B cell (primary cell): ENCODE measurements at regions of chr4 and their contacts with region 1.

Region 1: GRCh38 chr4:56301181-56302076 is 85.9 kb downstream of the AASDH start:
- DNase-seq: peak; percentile 56
- ATAC-seq: peak; percentile 57
- H3K4me3 ChIP-seq: no peak overlapping the region
- H3K4me3 Mint-ChIP-seq: no peak overlapping the region
- H3K27ac ChIP-seq: no peak overlapping the region
- H3K27ac Mint-ChIP-seq: no peak overlapping the region
- H3K4me1 ChIP-seq: peaks cover 0 to 5% of the 10 kb centered on the region in 2 donors
- H3K4me1 Mint-ChIP-seq: peaks cover 7% of the 10 kb centered on the region
- H3K27me3 ChIP-seq: no peaks in the 10 kb centered on the region
- H3K27me3 Mint-ChIP-seq: no peaks in the 10 kb centered on the region
- CTCF ChIP-seq: peak; percentile 61

Region 2: DNA sequence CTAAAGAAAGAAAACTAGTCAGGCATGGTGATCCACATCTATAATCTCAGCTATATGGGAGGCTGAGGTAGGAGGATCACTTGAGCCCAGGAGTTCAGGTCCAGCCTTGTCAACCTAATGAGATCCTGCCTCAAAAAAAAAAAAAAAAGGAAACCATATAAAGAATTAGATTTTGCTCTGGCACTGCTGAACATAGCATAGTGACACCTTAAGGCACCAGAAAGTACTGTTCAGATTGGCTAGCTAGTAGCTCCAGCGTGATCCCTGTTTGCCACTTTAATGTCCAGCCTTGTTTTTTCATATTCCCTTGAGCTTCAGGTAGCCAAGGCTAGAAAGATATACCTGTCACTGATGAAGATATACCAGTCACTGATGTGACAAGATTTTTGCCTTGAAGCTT is 413.8 kb before region 1 on chr4:
- CTCF ChIA-PET with region 1: no interaction called
- POLR2A ChIA-PET with region 1: no interaction called
- intact Hi-C with region 1: loop called (anchors 5 kb)
- DNase-seq: no peak
- ATAC-seq: no peak
- H3K4me3 ChIP-seq: no peak overlapping the region
- H3K4me3 Mint-ChIP-seq: no peak overlapping the region
- H3K27ac ChIP-seq: no peak overlapping the region
- H3K27ac Mint-ChIP-seq: no peak overlapping the region
- H3K4me1 ChIP-seq: peaks cover 0 to 8% of the 10 kb centered on the region in 2 donors
- H3K4me1 Mint-ChIP-seq: peaks cover 13% of the 10 kb centered on the region
- H3K27me3 ChIP-seq: no peaks in the 10 kb centered on the region
- H3K27me3 Mint-ChIP-seq: no peaks in the 10 kb centered on the region
- CTCF ChIP-seq: no peak